ENCODE measurements at regions of chr20 and their contacts with region 1.

Region 1: DNA sequence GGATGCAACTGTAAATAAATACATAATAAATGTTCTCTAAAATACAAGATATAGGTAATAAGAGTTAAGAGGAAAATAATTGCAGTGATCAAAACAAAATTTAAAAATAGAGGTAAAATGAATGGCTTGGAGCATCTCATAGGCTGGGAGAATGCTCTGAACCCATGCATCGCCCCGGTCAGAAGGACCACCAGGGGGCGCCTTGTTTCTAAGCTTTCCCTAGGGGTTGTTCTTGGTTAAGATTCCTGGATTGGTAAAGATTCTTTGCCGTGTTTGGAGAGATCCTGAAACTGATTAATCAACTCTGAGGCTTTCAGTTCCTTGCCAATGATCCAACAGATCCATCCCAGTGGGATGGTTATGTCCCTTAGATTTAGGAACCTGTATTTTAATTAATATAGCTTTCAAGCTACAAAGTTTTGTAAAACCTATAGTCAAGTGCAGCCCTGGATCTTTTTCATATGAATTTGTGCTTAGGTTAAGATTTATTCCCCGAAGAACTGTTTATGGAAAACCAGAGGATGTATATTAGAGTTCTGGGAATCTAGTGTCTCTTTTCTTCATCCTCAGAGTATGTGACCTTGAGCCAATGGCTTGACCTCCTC is 45.3 kb upstream of the PRELID3B start:
- DNase-seq: peak; percentile 82 to 94 (median 87)
- ATAC-seq: peak; percentile 63 to 75
- H3K4me3 ChIP-seq: no peak overlapping the region
- H3K27ac ChIP-seq: no peak overlapping the region
- H3K4me1 ChIP-seq: no peaks in the 10 kb centered on the region
- H3K27me3 ChIP-seq: no peaks in the 10 kb centered on the region

Region 2: DNA sequence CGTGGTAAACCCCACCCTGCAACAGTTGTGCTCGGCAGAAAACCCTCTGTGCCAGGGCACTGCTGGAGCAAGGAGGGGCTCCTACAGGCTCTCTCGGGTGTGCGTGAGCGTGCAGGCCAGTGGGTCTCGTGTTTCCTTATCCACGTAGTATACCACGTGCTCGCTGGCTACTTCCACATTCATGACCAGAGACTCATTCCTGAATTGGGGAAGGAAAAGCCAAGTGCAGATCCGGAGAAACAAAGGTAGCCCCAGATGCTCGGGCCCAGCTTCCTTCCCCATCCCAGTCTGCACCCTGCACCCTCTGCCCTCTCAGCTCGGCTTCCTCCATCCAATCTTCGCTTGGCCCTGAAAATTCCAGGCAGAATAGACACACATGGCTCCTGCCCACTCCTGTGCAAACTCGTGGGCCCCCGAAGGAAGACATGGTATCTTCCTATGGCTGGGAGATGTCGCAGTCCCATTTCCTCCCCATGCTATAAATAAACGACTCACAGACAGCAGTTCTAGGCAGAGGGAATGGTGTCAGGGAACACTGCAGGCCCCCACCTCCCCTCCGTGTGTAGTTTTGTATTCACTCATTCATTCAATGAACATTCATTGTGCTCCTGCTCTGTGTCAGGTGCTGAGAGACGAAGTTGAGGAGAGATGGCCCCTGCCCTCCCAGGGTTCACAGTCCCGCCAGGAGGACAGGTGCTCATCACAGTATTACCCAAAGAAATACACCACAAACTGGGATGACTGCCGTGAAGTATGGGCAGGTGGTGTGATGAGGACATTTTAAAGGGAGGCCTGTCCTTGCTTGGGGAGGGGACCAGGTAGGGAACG is 365.8 kb before region 1 on chr20:
- intact Hi-C with region 1: no loop called
- DNase-seq: peak in 2 of 3 donors; percentile 18 to 56
- ATAC-seq: peak in 1 of 2 donors; percentile 35
- H3K4me3 ChIP-seq: no peak overlapping the region
- H3K27ac ChIP-seq: no peak overlapping the region
- H3K4me1 ChIP-seq: no peaks in the 10 kb centered on the region
- H3K27me3 ChIP-seq: no peaks in the 10 kb centered on the region

Region 3: DNA sequence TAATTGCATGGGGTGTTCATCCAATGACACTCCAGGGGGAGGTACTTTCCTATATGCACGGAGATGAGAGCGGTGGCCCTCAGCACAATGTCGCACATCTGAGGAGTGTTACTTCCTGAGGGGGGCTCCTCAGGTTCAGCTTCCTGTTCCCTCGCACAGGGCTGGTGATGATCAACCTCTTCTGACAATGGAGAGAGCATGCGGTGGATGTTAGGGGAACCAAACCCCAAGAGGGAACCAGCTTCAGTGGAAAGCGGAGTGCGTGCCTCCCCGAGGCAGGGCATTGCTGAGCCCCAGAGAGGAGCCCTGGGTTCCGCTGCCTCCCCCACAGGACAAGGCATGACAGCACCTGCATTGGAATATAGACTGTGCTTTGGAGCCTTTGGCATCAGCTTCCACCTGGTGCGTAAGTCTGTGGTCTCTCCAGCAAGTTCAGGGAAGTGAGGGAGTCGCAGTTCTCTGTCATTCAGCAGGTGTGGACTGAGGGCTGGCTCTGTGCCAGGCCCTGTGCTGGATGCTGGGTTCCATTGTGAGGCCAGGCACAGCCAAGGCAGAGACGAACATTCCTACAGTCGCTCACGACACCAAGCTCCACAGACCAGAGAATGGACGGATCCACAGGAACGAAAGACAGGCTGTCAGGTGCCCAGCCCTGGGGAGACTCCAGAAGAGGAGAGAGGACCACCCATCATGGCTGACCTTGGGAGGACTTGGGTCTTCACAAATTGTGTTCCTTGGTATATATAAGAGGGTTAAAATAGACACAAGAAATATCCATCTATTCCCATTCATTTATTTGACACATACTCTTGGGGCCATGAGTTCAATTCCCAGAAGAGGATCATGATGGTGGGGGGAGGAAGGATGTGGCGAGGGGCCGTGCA is 71.8 kb after region 1 on chr20:
- intact Hi-C with region 1: no loop called
- DNase-seq: peak in 1 of 3 donors; percentile 61
- ATAC-seq: peak; percentile 14 to 29
- H3K4me3 ChIP-seq: no peak overlapping the region
- H3K27ac ChIP-seq: no peak overlapping the region
- H3K4me1 ChIP-seq: peaks cover 2% of the 10 kb centered on the region
- H3K27me3 ChIP-seq: no peaks in the 10 kb centered on the region

Region 4: GRCh38 chr20:59455402-59456341 is 367.7 kb after region 1 on chr20:
- intact Hi-C with region 1: loop called in 1 of 4 experiments (anchors 10 kb)
- DNase-seq: peak in 2 of 3 donors; percentile 54 to 82
- ATAC-seq: peak; percentile 75 to 77
- H3K4me3 ChIP-seq: no peak overlapping the region
- H3K27ac ChIP-seq: no peak overlapping the region
- H3K4me1 ChIP-seq: no peaks in the 10 kb centered on the region
- H3K27me3 ChIP-seq: no peaks in the 10 kb centered on the region

Measured in right cardiac atrium (tissue), 5 donors.